T-cell (primary cell): ENCODE measurements at regions of chr12 and their contacts with region 1.

Region 1: GRCh38 chr12:67193704-67194103 is 75.5 kb upstream of the CAND1 start:
- DNase-seq: peak in 7 of 35 experiments; percentile 0 to 34 (median 5)
- ATAC-seq: no peak
- H3K4me3 ChIP-seq: no peak overlapping the region
- H3K4me3 Mint-ChIP-seq: no peak overlapping the region
- H3K27ac ChIP-seq: no peak overlapping the region
- H3K27ac Mint-ChIP-seq: no peak overlapping the region
- H3K4me1 ChIP-seq: no peaks in the 10 kb centered on the region
- H3K4me1 Mint-ChIP-seq: no peaks in the 10 kb centered on the region
- H3K27me3 ChIP-seq: no peaks in the 10 kb centered on the region
- H3K27me3 Mint-ChIP-seq: peaks cover 23 to 26% of the 10 kb centered on the region in 2 donors

Region 2: DNA sequence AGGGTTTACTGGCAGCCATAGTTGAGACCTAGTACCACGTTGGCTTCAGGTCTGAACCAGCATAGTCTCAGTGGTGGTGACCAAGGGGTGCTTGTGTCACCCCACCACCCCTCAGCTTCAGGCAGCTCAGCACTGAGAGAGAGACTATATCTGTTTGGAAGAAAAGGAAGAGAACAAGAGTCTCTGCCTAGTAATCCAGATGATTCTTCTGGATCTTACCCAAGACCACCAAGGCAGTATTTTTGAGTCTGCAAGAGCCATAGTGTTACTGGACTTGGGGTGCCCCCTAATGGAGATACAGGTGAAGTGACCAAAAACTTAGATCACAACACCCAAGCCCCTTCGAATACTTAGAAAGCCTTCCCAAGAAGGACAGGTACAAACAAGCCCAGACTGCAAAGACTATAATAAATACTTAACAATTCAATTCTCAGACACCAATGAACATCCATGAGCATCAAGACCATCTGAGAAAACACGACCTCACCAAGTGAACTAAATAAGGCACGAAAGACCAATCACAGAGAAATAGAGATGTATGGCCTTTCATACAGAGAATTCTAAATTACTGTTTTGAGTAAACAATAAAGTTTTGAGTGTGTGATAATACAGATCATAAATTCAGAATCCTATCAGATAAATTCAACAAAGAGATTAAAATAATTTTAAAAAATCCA is 784.4 kb before region 1 on chr12:
- CTCF ChIA-PET with region 1: interaction called in 1 of 2 experiments, 11 read pairs
- POLR2A ChIA-PET with region 1: no interaction called
- DNase-seq: peak in 31 of 35 experiments; percentile 2 to 69 (median 24)
- ATAC-seq: peak in 1 of 4 experiments; percentile 61
- H3K4me3 ChIP-seq: no peak overlapping the region
- H3K4me3 Mint-ChIP-seq: no peak overlapping the region
- H3K27ac ChIP-seq: no peak overlapping the region
- H3K27ac Mint-ChIP-seq: no peak overlapping the region
- H3K4me1 ChIP-seq: peaks cover 0 to 3% of the 10 kb centered on the region in 2 experiments
- H3K4me1 Mint-ChIP-seq: no peaks in the 10 kb centered on the region
- H3K27me3 ChIP-seq: peaks cover 0 to 7% of the 10 kb centered on the region in 2 experiments
- H3K27me3 Mint-ChIP-seq: peaks cover 12 to 22% of the 10 kb centered on the region in 2 donors